ENCODE measurements at regions of chr7 and their contacts with region 1.

Region 1: GRCh38 chr7:17298207-17298839 is at the start of gene AHR:
- H3K4me3 Mint-ChIP-seq: peak within 1 kb of the TSS; percentile 99
- H3K27ac Mint-ChIP-seq: peak within 1 kb of the TSS; percentile 95
- H3K4me1 Mint-ChIP-seq: peaks cover 18% of the 10 kb centered on the region
- H3K27me3 Mint-ChIP-seq: no peaks in the 10 kb centered on the region

Region 2: GRCh38 chr7:16982640-16983350 is 315.5 kb before region 1 on chr7:
- intact Hi-C with region 1: loop called (anchors 5 kb)
- H3K4me3 Mint-ChIP-seq: peak overlapping the region; percentile 24
- H3K27ac Mint-ChIP-seq: peak overlapping the region; percentile 56
- H3K4me1 Mint-ChIP-seq: peaks cover 23% of the 10 kb centered on the region
- H3K27me3 Mint-ChIP-seq: peaks cover 3% of the 10 kb centered on the region

Region 3: DNA sequence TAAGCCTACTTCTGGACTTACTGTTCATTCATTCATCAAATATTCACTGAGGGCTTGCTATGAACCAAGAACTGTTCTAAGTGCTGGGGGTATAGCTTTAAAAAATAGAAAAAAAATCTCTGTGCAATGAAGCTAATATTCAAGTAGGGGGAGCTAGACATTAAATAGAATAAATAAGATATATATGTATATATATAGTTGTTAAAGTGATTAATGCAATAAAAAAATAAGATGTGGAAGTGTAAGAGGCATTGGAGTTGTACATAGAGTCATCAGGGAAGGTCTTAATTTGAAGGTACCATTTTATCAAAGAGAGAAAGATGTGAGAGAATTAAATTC is 235.3 kb before region 1 on chr7:
- intact Hi-C with region 1: loop called (anchors 10 kb)
- H3K4me3 Mint-ChIP-seq: no peak overlapping the region
- H3K27ac Mint-ChIP-seq: no peak overlapping the region
- H3K4me1 Mint-ChIP-seq: peaks cover 18% of the 10 kb centered on the region
- H3K27me3 Mint-ChIP-seq: no peaks in the 10 kb centered on the region

Region 4: DNA sequence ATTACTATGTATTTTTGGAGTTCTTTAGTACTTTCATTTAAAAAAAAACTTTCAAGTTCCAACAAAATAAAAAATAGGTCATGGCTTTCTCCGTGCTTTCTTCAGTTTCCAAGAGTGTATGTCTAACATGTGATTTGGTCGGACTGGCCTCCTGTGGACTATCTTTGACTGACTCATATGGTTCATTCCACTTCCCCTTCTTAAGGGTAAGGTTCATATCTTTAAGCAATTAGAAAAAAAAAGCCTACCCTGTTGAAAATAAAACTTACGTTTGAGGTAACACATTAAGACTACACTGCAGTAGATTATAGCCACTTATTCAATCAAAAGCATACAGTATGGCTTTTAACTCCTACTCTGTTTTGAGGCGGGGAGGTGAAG is 112.6 kb before region 1 on chr7:
- intact Hi-C with region 1: loop called (anchors 5 kb)
- H3K4me3 Mint-ChIP-seq: no peak overlapping the region
- H3K27ac Mint-ChIP-seq: peak overlapping the region; percentile 64
- H3K4me1 Mint-ChIP-seq: peaks cover 27% of the 10 kb centered on the region
- H3K27me3 Mint-ChIP-seq: no peaks in the 10 kb centered on the region

Region 5: GRCh38 chr7:17255926-17256325 is 42.4 kb before region 1 on chr7:
- intact Hi-C with region 1: loop called (anchors 5 kb)
- H3K4me3 Mint-ChIP-seq: no peak overlapping the region
- H3K27ac Mint-ChIP-seq: peak overlapping the region; percentile 4
- H3K4me1 Mint-ChIP-seq: peaks cover 41% of the 10 kb centered on the region
- H3K27me3 Mint-ChIP-seq: no peaks in the 10 kb centered on the region